ENCODE measurements at regions of chr5 and their contacts with region 1.

Region 1: DNA sequence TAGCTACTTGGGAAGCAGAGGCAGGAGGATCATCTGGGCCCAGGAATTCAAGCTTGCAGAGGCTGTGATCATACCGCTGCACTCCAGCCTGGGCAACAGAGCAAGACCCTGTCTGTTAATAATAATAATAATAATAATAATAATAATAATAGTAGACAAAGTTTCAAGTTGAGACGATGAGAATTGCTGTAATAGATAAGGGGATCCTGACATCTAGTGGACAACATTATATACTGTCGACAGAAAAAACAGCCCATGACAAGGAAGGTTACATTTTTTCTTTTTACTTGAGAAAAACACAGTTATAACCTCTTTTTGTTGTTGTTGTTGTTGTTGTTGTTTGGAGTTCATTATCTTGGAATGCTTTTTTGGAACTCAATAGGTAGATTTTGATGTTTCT is 35.3 kb downstream of the NDFIP1 start:
- DNase-seq: no peak
- ATAC-seq: peak; percentile 56

Region 2: DNA sequence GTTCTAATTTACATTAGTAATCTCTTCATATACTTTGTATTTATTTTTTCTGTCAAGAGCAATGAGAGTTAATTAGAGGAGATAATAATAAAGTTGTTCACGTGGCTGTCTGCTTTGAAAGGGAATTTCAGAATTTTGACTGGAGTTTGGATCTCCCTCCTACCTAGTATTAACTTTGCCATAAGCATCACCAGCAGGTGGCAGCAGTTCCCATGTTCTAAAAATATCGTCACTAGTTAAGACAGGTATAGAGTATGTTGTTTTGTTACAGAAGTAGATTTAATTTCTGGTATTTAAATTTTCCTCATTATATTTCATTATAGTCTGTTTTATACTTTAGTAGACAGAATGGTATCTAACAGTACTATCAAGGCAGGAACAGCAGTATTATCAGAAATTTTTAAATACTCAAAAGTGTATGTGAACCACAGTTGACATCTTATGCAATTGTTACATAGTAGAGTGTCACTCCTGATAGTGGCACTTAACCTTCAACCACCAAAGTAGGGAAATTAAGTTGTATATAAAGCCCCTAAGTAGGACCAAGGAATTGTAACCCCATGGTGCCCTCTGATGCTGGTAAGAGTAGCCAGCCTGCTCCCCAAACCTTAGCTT is 151.4 kb before region 1 on chr5:
- intact Hi-C with region 1: loop called (anchors 5 kb)
- DNase-seq: peak; percentile 69
- ATAC-seq: peak; percentile 84

Region 3: GRCh38 chr5:142012792-142013388 is 131.0 kb before region 1 on chr5 and contains the start of gene GNPDA1:
- intact Hi-C with region 1: loop called (anchors 5 kb)
- DNase-seq: peak; percentile 91
- ATAC-seq: peak; percentile 95
- total RNA-seq, gene GNPDA1: 22.7 TPM